ENCODE measurements at regions of chr6 and their contacts with region 1.

Region 1: GRCh38 chr6:137944793-137945498 is 77.9 kb downstream of the TNFAIP3 start:
- H3K4me3 ChIP-seq: no peak overlapping the region
- H3K27ac ChIP-seq: no peak overlapping the region
- H3K4me1 ChIP-seq: no peaks in the 10 kb centered on the region
- CTCF ChIP-seq: 0 out of 2 replicates have a peak, but pooled peaks have one; percentile 30

Region 2: GRCh38 chr6:137363805-137364138 is 581.2 kb before region 1 on chr6:
- CTCF ChIA-PET with region 1: no interaction called
- POLR2A ChIA-PET with region 1: no interaction called
- H3K4me3 ChIP-seq: no peak overlapping the region
- H3K27ac ChIP-seq: no peak overlapping the region
- H3K4me1 ChIP-seq: no peaks in the 10 kb centered on the region
- CTCF ChIP-seq: no peak

Region 3: DNA sequence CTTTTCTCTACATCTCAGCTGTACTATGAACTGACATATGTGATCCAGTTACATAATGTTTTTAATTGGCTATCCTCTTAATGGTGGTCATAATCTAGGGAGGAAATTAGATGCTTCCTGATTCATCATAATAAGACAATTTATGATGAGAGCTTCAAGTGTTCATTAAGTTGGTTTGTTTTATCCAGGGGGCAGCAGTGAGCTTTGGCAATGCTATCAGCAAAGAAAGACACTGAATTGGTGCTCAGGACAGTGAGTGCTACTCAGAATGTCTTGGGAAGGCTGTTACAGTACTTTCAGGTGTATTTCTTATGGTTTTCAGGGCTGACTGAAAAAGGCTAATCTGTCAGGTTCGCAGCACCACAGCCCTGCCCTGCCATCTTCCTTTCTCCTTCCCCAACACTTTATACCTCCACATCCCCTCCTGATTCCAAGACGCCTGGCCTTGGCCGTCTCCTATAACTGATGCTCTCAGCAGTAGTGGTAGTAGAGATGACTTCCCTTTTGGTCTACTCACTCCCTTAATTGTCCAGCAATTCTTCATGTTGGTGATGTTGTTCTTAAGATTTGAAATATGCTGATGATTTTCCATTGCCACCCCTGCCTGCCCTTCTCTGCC is 144.9 kb before region 1 on chr6:
- CTCF ChIA-PET with region 1: interaction called, 30 read pairs
- POLR2A ChIA-PET with region 1: interaction called, 5 read pairs
- H3K4me3 ChIP-seq: no peak overlapping the region
- H3K27ac ChIP-seq: no peak overlapping the region
- H3K4me1 ChIP-seq: no peaks in the 10 kb centered on the region
- CTCF ChIP-seq: no peak

Region 4: DNA sequence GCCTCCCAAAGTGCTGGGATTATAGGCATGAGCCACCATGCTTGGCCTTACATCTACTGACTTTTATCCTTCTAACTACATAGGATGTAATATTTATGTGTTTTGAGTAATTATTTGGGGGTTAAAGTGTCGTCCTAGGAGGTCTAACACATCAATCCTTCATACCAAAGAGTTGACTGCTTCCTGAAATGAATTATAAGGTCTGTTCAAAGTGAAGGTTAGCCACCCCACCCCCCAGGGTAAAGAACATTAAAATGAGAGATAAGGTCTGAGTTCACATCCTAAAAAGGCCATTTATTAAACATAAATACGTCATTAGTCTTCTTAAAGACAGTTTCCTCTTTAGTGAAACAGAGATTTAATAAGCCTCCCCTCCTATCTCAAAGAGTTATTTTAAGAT is 44.1 kb before region 1 on chr6:
- CTCF ChIA-PET with region 1: no interaction called
- POLR2A ChIA-PET with region 1: no interaction called
- H3K4me3 ChIP-seq: no peak overlapping the region
- H3K27ac ChIP-seq: no peak overlapping the region
- H3K4me1 ChIP-seq: no peaks in the 10 kb centered on the region
- CTCF ChIP-seq: no peak

Region 5: GRCh38 chr6:137927777-137928218 is 17.1 kb before region 1 on chr6:
- CTCF ChIA-PET with region 1: interaction called, 33 read pairs
- POLR2A ChIA-PET with region 1: no interaction called
- H3K4me3 ChIP-seq: no peak overlapping the region
- H3K27ac ChIP-seq: no peak overlapping the region
- H3K4me1 ChIP-seq: no peaks in the 10 kb centered on the region
- CTCF ChIP-seq: no peak

Region 6: DNA sequence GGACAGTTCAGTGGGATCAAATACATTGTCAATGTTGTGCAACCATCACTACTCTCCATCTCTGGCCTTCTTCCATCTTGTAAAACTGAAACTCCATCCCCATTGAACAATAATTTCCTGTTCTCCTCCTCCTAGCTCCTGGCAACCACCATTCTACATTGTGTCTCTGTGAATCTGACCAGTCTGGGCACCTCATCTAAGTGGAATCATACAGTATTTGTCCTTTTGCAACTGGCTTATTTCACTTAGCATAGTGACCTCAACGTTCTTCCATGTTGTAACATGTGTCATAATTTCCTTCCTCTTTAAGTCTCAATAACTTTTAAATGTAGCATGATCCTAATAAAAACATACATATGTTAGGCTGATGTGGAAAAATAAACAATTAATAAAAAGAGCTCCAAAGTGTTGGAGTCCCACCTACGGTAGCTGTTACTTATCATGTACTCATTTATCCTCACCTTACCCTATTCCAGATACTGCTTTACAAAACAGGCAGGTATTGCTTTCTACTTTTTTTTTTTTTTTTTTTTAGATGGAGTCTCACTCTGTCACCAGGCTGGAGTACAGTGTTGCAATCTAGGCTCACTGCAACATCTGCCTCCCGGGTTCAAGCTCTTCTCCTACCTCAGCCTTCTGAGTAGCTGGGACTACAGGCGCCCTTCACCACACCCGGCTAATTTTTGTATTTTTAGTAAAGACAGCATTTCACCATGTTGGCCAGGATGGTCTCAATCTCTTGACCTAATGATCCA is 14.0 kb after region 1 on chr6:
- CTCF ChIA-PET with region 1: interaction called, 14 read pairs
- POLR2A ChIA-PET with region 1: no interaction called
- H3K4me3 ChIP-seq: no peak overlapping the region
- H3K27ac ChIP-seq: no peak overlapping the region
- H3K4me1 ChIP-seq: no peaks in the 10 kb centered on the region
- CTCF ChIP-seq: no peak

Region 7: DNA sequence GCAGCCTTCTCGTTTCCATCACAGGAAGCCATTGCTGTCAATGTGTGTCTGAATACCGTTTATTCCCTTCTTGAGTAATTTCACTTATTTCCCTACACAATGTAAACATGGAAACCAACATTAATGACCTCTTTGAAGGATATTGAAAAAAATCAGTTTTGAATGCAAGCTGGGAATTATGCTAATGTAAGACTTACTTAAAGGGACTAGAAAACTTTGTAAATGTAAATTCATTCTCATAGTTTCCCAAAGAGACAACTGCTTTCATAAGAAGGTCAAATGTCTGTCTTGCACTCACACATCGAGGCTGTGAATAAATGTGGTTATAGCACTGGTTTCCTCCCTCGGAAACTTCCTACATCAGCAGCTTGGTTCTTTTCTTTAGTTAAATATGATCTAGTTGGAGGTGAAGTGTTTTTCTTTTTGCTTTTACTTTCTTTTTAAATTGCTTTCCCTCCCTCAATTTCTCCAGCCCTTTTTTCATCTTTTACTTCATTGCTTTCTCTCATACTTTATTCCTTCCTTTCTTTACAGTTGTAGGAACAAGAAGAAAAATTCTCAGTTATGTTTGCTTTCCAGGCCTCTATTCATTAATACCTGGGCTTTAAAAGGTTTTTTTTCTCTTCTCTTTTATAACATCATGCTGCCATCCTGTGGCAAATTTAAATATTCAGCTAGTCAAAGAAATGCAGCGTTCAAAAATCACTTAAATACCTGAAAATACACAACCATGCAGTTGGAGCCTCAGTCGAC is 30.4 kb after region 1 on chr6:
- CTCF ChIA-PET with region 1: interaction called, 12 read pairs
- POLR2A ChIA-PET with region 1: no interaction called
- H3K4me3 ChIP-seq: no peak overlapping the region
- H3K27ac ChIP-seq: no peak overlapping the region
- H3K4me1 ChIP-seq: no peaks in the 10 kb centered on the region
- CTCF ChIP-seq: 0 out of 2 replicates have a peak, but pooled peaks have one; percentile 13

Measured in HEK293 (cell line).